HepG2 (cell line): ENCODE measurements at regions of chr11 and their contacts with region 1.

Region 1: GRCh38 chr11:39425226-39425625 is 2034.2 kb downstream of the LRRC4C start:
- DNase-seq: no peak
- ATAC-seq: no peak
- H3K4me3 ChIP-seq: no peak overlapping the region
- H3K27ac ChIP-seq: no peak overlapping the region
- H3K4me1 ChIP-seq: no peaks in the 10 kb centered on the region
- H3K27me3 ChIP-seq: no peaks in the 10 kb centered on the region; a peak in 1 of 5 replicates
- CTCF ChIP-seq: no peak
- EP300 ChIP-seq: no peak
- POLR2A ChIP-seq: no peak
- RAD21 ChIP-seq: no peak

Region 2: GRCh38 chr11:38927993-38928392 is 497.2 kb before region 1 on chr11:
- CTCF ChIA-PET with region 1: no interaction called
- POLR2A ChIA-PET with region 1: no interaction called
- in situ Hi-C with region 1: no loop called
- intact Hi-C with region 1: no loop called
- DNase-seq: no peak
- ATAC-seq: no peak
- H3K4me3 ChIP-seq: no peak overlapping the region
- H3K27ac ChIP-seq: no peak overlapping the region
- H3K4me1 ChIP-seq: no peaks in the 10 kb centered on the region
- H3K27me3 ChIP-seq: no peaks in the 10 kb centered on the region; a peak in 1 of 5 replicates
- CTCF ChIP-seq: no peak
- EP300 ChIP-seq: no peak
- POLR2A ChIP-seq: no peak
- RAD21 ChIP-seq: no peak

Region 3: DNA sequence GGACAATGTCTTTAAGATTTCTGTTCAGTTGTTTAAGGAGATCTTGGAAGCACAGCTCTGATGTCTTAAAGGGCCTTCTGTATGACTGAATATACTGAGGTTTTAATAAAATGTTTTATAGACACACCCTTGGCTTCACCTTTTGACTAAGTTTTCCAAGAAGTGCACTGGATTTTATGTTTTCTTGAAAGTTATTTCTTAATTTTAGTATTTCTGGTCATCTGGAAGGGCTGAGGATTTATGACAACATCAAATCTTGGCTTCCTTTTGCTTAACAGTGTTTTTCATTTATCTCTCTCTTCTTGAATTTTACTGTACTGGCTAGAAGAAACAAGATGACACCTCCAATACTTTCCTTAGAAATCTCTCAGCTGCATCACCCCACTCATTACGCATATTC is 389.2 kb before region 1 on chr11:
- CTCF ChIA-PET with region 1: no interaction called
- POLR2A ChIA-PET with region 1: no interaction called
- in situ Hi-C with region 1: no loop called
- intact Hi-C with region 1: loop called (anchors 5 kb)
- DNase-seq: no peak
- ATAC-seq: no peak
- H3K4me3 ChIP-seq: no peak overlapping the region
- H3K27ac ChIP-seq: no peak overlapping the region
- H3K4me1 ChIP-seq: no peaks in the 10 kb centered on the region
- H3K27me3 ChIP-seq: no peaks in the 10 kb centered on the region
- CTCF ChIP-seq: no peak
- EP300 ChIP-seq: no peak
- POLR2A ChIP-seq: no peak
- RAD21 ChIP-seq: no peak

Region 4: DNA sequence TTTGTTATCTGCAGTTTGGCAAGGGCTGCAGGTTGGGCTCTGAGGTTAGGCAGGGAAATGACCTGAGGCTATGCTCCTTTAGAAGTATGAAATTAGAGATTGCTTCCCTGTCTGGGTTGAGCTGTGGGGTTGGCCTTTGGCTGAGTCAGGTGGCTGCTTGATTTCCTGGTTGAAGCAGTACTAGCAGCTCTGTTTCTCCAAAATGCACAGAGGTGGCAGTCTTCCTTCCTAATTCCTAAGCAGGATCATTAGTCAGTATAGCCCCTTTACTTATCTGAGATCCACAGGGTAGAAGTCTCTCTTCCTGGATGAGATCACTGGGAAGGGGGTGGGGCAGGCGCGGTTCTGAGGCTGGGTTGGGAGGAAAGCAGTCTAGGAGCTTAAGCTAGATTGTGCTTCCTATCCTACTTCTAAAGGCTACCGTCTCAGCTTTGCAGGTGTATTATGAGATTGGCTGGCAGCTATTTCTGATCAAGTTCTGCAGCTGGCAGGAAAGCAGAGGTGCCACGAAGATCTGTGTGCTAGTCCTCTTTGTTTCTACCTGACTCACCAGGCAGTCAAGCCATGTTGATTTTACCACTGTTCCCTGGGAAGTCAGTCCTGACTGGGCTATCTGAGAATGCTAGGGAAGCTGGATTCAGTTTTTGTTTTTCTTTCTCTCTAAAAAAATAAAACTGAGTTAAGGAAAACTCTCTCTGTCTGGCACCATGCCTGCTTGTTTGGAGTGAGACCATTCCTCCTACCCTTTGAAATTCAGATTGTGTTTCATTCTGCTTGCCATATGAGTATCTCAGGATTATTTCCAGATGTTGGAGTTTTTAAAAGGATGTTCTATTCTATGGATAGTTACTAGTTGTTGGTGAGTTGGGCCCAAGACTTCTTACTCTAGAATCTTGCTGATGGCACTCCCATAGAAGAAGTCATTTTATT is 117.0 kb after region 1 on chr11:
- CTCF ChIA-PET with region 1: no interaction called
- POLR2A ChIA-PET with region 1: no interaction called
- in situ Hi-C with region 1: no loop called
- intact Hi-C with region 1: no loop called
- DNase-seq: no peak
- ATAC-seq: no peak
- H3K4me3 ChIP-seq: no peak overlapping the region
- H3K27ac ChIP-seq: no peak overlapping the region
- H3K4me1 ChIP-seq: no peaks in the 10 kb centered on the region
- H3K27me3 ChIP-seq: no peaks in the 10 kb centered on the region
- CTCF ChIP-seq: no peak
- EP300 ChIP-seq: no peak
- POLR2A ChIP-seq: no peak
- RAD21 ChIP-seq: no peak